Heart left ventricle (tissue), 16 donors: ENCODE measurements at regions of chr1 and their contacts with region 1.

Region 1: GRCh38 chr1:96416701-96417444 is 304.7 kb upstream of the PTBP2 start:
- DNase-seq: no peak
- ATAC-seq: no peak
- H3K4me3 ChIP-seq: no peak overlapping the region
- H3K27ac ChIP-seq: peak overlapping the region in 5 of 12 donors; percentile 25 to 72 (median 65)
- H3K4me1 ChIP-seq: peaks cover 0 to 14% (median 2%) of the 10 kb centered on the region in 12 donors
- H3K27me3 ChIP-seq: no peaks in the 10 kb centered on the region
- CTCF ChIP-seq: no peak
- POLR2A ChIP-seq: no peak

Region 2: DNA sequence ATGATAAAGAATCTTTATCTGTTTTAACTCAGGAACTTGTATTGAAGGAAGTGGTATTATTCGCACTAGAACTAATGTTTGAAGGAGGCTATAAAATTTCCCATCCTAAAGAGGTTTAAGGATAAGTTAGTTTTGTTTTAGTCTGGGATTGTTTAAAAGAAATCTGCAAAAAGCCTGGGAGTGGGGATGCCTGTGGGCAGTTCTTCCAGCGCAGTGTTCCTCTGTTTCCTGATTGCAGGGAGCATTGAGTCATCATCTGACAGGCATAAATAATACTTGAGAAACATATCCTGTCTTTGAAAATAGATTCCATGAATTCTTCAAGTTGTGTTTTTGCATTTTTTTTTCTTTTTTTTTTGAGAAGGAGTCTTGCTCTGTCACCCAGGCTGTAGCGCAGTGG is 46.1 kb before region 1 on chr1:
- intact Hi-C with region 1: loop called in 1 of 10 experiments (anchors 2 kb)
- DNase-seq: no peak
- ATAC-seq: no peak
- H3K4me3 ChIP-seq: no peak overlapping the region
- H3K27ac ChIP-seq: no peak overlapping the region
- H3K4me1 ChIP-seq: no peaks in the 10 kb centered on the region
- H3K27me3 ChIP-seq: no peaks in the 10 kb centered on the region
- CTCF ChIP-seq: no peak
- POLR2A ChIP-seq: no peak

Region 3: GRCh38 chr1:96487394-96487793 is 70.5 kb after region 1 on chr1:
- intact Hi-C with region 1: no loop called
- DNase-seq: no peak
- ATAC-seq: no peak
- H3K4me3 ChIP-seq: no peak overlapping the region
- H3K27ac ChIP-seq: peak overlapping the region in 1 of 12 donors; percentile 30
- H3K4me1 ChIP-seq: no peaks in the 10 kb centered on the region
- H3K27me3 ChIP-seq: no peaks in the 10 kb centered on the region
- CTCF ChIP-seq: no peak
- POLR2A ChIP-seq: no peak